ENCODE measurements at regions of chr9 and their contacts with region 1.

Region 1: DNA sequence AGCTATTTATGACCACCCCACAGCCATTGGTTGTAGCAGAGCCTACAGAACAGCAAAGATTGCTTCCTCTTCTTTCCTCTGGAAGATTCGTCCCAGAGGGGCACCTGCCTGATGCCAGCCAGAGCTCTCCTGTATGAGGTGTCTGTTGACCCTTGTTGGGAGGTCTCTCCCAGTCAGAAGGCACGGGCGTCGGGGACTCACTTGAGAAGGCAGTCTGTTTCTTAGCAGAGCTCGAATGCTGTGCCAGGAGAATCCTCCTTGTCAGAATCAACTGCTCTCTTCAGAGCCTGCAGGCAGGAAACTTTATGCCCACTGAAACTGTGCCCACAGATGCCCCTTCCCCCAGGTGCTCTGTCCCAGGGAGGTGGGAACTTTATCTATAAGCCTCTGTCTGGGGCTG is 479.5 kb upstream of the IZUMO3 start:
- DNase-seq: no peak
- H3K4me3 ChIP-seq: no peak overlapping the region
- H3K27ac ChIP-seq: no peak overlapping the region
- H3K4me1 ChIP-seq: no peaks in the 10 kb centered on the region
- H3K27me3 ChIP-seq: no peaks in the 10 kb centered on the region
- CTCF ChIP-seq: no peak

Region 2: GRCh38 chr9:24986331-24986730 is 38.8 kb before region 1 on chr9:
- CTCF ChIA-PET with region 1: no interaction called
- dilution Hi-C with region 1: loop called (anchors 5 kb)
- in situ Hi-C with region 1: no loop called
- intact Hi-C with region 1: no loop called
- DNase-seq: no peak
- H3K4me3 ChIP-seq: no peak overlapping the region
- H3K27ac ChIP-seq: no peak overlapping the region
- H3K4me1 ChIP-seq: no peaks in the 10 kb centered on the region
- H3K27me3 ChIP-seq: no peaks in the 10 kb centered on the region
- CTCF ChIP-seq: no peak

Region 3: DNA sequence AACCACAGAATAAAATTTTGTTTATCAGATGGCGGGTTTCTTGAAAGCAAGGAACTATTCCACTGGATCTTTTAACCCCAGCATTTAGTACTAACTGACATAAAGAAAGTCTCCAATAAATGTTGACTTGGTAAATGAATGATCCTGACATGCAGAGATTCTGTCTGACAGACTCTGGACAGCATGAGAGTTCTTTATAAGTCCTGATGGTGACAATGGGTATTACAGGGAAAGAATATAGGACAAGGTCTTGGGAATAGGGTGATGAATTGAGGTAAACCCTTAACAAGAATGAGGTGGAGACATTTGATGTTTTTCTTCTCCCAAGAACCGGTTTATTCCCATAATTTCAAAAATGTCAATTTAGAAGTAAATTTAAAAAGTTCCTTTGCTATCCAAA is 199.2 kb after region 1 on chr9:
- CTCF ChIA-PET with region 1: no interaction called
- dilution Hi-C with region 1: no loop called
- in situ Hi-C with region 1: no loop called
- intact Hi-C with region 1: no loop called
- DNase-seq: no peak
- H3K4me3 ChIP-seq: no peak overlapping the region
- H3K27ac ChIP-seq: no peak overlapping the region
- H3K4me1 ChIP-seq: no peaks in the 10 kb centered on the region
- H3K27me3 ChIP-seq: no peaks in the 10 kb centered on the region
- CTCF ChIP-seq: no peak